Endothelial cell of umbilical vein (primary cell): ENCODE measurements at regions of chr7 and their contacts with region 1.

Region 1: DNA sequence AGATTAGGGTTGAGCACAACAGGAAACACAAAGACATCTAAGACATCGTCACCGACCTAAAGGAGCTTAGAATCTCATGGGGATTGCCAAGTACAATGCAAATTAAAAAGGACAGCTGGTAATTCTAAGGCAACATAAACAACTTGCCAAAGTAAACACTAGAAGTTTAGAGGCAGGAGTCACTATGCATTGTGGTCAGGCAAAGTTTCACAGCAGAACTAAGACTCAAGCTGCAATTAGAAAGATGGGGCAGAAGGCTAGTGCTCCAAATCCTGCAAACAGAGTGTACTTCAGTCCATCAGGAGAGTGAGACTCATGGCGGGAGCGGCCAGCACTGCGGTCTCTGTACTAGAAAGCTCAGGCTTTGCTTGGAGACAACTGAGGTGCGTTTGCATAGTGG is 52.7 kb downstream of the HIPK2 start:
- DNase-seq: peak; percentile 33
- H3K4me3 ChIP-seq: no peak overlapping the region
- H3K27ac ChIP-seq: no peak overlapping the region
- H3K4me1 ChIP-seq: peaks cover 41% of the 10 kb centered on the region
- H3K27me3 ChIP-seq: no peaks in the 10 kb centered on the region
- CTCF ChIP-seq: no peak
- POLR2A ChIP-seq: no peak

Region 2: GRCh38 chr7:139588632-139589031 is 136.4 kb before region 1 on chr7:
- CTCF ChIA-PET with region 1: no interaction called
- POLR2A ChIA-PET with region 1: no interaction called
- dilution Hi-C with region 1: no loop called
- intact Hi-C with region 1: no loop called
- DNase-seq: no peak
- H3K4me3 ChIP-seq: no peak overlapping the region
- H3K27ac ChIP-seq: no peak overlapping the region
- H3K4me1 ChIP-seq: no peaks in the 10 kb centered on the region
- H3K27me3 ChIP-seq: no peaks in the 10 kb centered on the region
- CTCF ChIP-seq: no peak
- POLR2A ChIP-seq: no peak

Region 3: DNA sequence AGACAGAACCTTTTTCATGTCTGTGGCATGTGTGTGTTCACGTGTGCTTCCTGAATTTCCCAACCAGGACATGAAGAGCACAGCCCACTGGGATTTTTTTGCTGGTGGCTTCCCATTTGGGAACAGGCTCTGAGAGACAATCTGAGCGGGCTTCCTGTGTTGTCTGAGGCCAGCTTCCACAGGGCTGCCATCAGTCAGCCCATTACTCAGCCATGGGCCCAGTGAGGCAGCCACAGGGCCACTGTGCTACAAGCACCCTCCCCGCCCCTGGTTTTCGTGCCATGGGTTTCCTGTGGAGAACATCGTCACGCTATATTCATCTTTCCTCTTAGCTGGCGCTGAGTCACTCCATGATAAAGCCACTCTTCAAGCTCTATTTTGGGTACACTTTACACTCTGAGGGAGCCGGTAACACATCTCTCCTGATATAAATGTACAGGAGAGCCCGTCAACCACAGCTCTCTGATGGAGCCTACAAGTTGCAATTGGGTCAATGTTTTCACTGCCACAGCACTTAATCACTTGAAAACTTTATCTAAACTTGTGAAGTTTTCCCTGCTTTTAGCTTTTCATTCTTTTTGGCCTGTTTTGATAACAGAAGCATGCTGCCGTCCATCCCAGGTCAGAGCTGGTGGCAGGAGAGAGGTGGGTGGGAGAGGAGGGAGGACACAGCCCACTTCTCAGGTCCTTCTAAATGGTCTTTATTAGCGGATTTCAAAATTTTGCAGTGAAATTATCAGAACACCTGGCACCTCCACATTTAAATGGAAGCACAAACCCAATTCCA is 44.2 kb before region 1 on chr7:
- CTCF ChIA-PET with region 1: interaction called, 3 read pairs
- POLR2A ChIA-PET with region 1: interaction called, 3 read pairs
- dilution Hi-C with region 1: no loop called
- intact Hi-C with region 1: loop called (anchors 1 kb)
- DNase-seq: peak; percentile 91
- H3K4me3 ChIP-seq: no peak overlapping the region
- H3K27ac ChIP-seq: peak overlapping the region; percentile 92
- H3K4me1 ChIP-seq: peaks cover 46% of the 10 kb centered on the region
- H3K27me3 ChIP-seq: no peaks in the 10 kb centered on the region
- CTCF ChIP-seq: no peak
- POLR2A ChIP-seq: peak; percentile 70

Region 4: GRCh38 chr7:139702811-139703486 is 22.1 kb before region 1 on chr7:
- CTCF ChIA-PET with region 1: no interaction called
- POLR2A ChIA-PET with region 1: no interaction called
- dilution Hi-C with region 1: no loop called
- intact Hi-C with region 1: no loop called
- DNase-seq: no peak
- H3K4me3 ChIP-seq: no peak overlapping the region
- H3K27ac ChIP-seq: no peak overlapping the region
- H3K4me1 ChIP-seq: peaks cover 9% of the 10 kb centered on the region
- H3K27me3 ChIP-seq: no peaks in the 10 kb centered on the region
- CTCF ChIP-seq: no peak
- POLR2A ChIP-seq: no peak

Region 5: GRCh38 chr7:139737221-139738100 is 12.4 kb after region 1 on chr7:
- CTCF ChIA-PET with region 1: interaction called, 10 read pairs
- POLR2A ChIA-PET with region 1: no interaction called
- dilution Hi-C with region 1: no loop called
- intact Hi-C with region 1: loop called (anchors 2 kb)
- DNase-seq: peak; percentile 48
- H3K4me3 ChIP-seq: no peak overlapping the region
- H3K27ac ChIP-seq: peak overlapping the region; percentile 57
- H3K4me1 ChIP-seq: peaks cover 47% of the 10 kb centered on the region
- H3K27me3 ChIP-seq: no peaks in the 10 kb centered on the region
- CTCF ChIP-seq: no peak
- POLR2A ChIP-seq: peak; percentile 25